ENCODE measurements at regions of chr12 and their contacts with region 1.

Region 1: DNA sequence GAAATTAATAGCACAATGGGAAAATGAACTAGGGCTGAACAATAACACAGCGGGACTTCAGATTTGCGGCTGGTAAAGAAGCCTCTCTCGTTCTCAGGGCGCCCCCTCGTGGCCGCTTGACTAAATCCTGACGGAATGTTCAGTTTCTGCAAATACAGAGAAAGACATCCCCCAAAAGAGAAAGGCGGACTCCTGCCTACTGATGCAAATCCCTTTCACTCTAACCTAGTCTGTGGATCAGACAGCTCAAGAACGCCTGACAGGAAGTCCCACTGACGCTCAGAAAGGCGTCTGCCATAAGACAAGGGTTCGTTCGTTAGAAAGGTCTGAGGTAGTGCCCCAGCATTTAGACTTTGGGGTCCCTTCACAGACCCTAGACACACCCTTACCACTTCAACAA is 2.5 kb downstream of the NUAK1 start:
- DNase-seq: peak; percentile 72
- H3K4me3 Mint-ChIP-seq: no peak overlapping the region
- H3K27ac Mint-ChIP-seq: no peak overlapping the region
- H3K4me1 Mint-ChIP-seq: peaks cover 7% of the 10 kb centered on the region
- H3K27me3 Mint-ChIP-seq: peaks cover 64% of the 10 kb centered on the region

Region 2: DNA sequence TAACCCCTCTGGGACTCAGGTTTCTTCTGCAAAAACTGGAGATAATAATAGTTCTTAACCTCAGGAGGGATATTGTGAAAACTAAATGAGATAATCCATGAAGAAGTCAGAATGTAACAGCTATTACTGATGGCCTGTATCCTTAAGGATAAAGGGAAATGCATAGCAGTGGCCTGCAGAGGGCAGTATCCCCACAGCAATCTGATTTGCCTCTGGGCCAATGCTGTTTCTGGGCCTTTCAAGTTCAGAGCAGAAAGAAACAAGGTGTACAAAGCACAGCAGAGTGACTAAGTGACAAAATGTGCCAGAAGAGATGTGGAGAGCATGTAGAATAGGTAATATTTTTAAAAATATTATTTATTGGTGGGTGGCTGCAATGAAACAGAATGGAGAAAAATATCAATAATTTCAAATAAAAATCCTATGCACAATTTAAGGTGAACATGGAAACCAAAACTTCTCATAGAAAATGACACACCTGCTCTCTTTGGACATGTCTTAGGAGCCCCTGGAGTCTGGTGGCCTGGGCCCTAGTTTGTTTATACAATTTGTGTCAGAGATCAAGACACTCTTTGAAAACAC is 715.5 kb before region 1 on chr12:
- CTCF ChIA-PET with region 1: interaction called, 34 read pairs
- POLR2A ChIA-PET with region 1: no interaction called
- DNase-seq: peak; percentile 71
- H3K4me3 Mint-ChIP-seq: no peak overlapping the region
- H3K27ac Mint-ChIP-seq: no peak overlapping the region
- H3K4me1 Mint-ChIP-seq: peaks cover 2% of the 10 kb centered on the region
- H3K27me3 Mint-ChIP-seq: no peaks in the 10 kb centered on the region

Region 3: DNA sequence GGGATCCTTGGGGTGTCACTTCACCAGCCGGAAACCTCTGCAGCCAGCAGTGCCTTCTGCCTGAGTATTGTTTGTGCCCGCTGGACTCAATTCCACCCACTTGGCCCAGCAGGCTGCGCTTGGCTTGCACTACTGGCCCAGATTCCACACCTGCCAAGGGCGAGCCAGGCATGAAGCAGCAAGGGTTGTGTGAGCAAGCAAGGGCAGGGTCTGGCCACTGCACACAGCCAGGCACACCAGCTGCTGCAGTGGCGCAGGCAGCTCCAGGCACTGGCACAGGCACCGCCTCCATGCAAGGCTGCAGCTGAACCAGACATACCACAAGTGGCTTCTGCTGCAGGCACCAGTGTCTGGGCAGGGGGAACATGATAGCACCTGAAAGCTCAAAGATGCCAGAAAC is 97.0 kb before region 1 on chr12:
- CTCF ChIA-PET with region 1: no interaction called
- POLR2A ChIA-PET with region 1: no interaction called
- DNase-seq: no peak
- H3K4me3 Mint-ChIP-seq: no peak overlapping the region
- H3K27ac Mint-ChIP-seq: no peak overlapping the region
- H3K4me1 Mint-ChIP-seq: no peaks in the 10 kb centered on the region
- H3K27me3 Mint-ChIP-seq: no peaks in the 10 kb centered on the region

Region 4: GRCh38 chr12:106149096-106149784 is 13.0 kb after region 1 on chr12:
- CTCF ChIA-PET with region 1: interaction called, 13 read pairs
- POLR2A ChIA-PET with region 1: no interaction called
- DNase-seq: no peak
- H3K4me3 Mint-ChIP-seq: no peak overlapping the region
- H3K27ac Mint-ChIP-seq: no peak overlapping the region
- H3K4me1 Mint-ChIP-seq: peaks cover 8% of the 10 kb centered on the region
- H3K27me3 Mint-ChIP-seq: peaks cover 40% of the 10 kb centered on the region